AG04450 (cell line): ENCODE measurements at regions of chr6 and their contacts with region 1.

Region 1: GRCh38 chr6:56292505-56293181 is 45.3 kb upstream of the COL21A1 start:
- DNase-seq: peak; percentile 41
- H3K4me3 ChIP-seq: no peak overlapping the region
- H3K27ac ChIP-seq: no peak overlapping the region
- H3K27me3 ChIP-seq: no peaks in the 10 kb centered on the region
- CTCF ChIP-seq: peak; percentile 70

Region 2: DNA sequence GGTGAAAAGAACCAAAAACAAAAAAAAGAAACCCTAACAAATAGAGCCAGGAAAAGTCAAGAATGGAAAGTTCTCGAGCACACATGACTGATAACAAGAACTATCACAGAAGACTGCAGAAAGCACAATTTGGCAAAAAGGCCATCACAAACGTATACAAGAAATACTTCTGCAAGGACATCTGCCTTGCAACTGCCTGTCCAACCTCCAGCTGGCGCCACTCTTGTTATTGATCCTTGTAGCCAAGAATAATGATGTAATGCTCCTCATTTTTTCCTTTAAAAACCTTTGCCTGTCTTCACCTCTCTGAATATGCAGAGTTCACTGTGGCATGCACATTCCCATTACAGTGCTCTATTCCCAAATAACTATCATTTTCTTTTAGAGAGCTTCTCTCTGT is 329.3 kb before region 1 on chr6:
- CTCF ChIA-PET with region 1: interaction called, 14 read pairs
- POLR2A ChIA-PET with region 1: no interaction called
- DNase-seq: no peak
- H3K4me3 ChIP-seq: no peak overlapping the region
- H3K27ac ChIP-seq: no peak overlapping the region
- H3K27me3 ChIP-seq: no peaks in the 10 kb centered on the region
- CTCF ChIP-seq: peak; percentile 35; the same call in 1 of the 2 replicates

Region 3: DNA sequence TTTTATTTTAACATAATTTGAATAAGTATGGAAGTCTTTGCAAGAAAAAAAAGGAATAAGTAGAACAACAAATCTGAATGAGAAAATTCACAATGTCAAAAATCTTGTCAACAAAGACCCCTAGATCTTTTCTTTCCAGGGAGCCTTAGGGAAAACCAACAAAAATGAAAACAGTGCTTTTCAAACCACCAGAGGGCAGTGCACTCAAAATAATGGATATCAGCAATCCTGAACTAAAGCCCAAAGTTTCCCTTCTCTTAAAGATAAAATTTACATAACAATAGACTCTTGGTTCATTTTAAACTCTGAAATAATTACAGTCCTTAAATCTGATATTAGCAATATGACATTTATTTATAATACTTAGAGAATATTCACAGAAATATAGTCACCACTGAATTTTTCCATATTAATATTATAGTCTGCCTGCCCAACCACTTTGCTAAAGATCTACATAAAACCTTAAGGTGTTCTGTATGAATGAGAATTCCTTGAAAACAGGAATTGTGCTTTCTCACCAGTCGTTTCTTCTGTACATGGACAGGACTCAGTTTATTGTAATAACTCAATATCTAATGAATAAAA is 311.9 kb before region 1 on chr6:
- CTCF ChIA-PET with region 1: interaction called, 59 read pairs
- POLR2A ChIA-PET with region 1: no interaction called
- DNase-seq: no peak
- H3K4me3 ChIP-seq: no peak overlapping the region
- H3K27ac ChIP-seq: no peak overlapping the region
- H3K27me3 ChIP-seq: no peaks in the 10 kb centered on the region
- CTCF ChIP-seq: peak; percentile 70

Region 4: DNA sequence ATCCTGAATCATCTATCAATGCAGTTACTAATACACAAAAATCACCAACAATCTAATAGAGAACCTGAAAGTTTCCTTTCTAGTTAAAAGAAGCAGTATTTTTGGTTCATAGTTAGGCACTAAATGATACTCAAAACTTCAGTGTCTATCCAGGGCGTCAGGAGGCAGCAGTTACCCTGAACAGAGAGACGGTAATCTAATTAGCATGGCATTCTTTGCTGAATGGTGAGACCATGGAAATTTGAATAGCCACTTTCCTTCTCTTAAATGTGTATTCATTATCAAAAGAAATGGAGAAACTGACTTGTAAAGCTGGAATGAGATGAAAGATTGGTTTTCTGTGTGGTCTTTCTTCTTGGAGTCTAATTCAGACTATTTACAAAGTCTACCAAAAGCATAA is 270.7 kb before region 1 on chr6:
- CTCF ChIA-PET with region 1: interaction called, 17 read pairs
- POLR2A ChIA-PET with region 1: no interaction called
- DNase-seq: no peak
- H3K4me3 ChIP-seq: no peak overlapping the region
- H3K27ac ChIP-seq: no peak overlapping the region
- H3K27me3 ChIP-seq: no peaks in the 10 kb centered on the region
- CTCF ChIP-seq: peak; percentile 32